ENCODE measurements at regions of chr15 and their contacts with region 1.

Region 1: DNA sequence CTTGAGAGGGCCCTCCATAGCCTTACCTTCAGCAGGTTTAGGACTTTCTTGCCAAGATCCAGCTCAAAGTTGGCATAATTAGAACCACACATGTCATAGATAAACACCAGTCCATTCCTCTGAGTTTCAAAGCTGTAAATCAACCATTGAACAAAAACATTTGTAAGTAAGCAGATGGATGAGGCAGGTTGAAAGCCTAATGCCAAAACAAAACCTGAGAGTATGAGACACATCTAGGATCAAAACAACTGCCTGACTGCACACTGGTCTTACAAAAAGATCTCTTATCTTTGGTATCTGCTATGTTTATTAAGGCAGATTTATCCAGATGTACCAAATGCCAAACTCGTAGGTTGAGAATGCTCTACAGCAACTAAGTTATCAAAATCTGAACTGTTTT is 61.9 kb downstream of the PTPN9 start:
- DNase-seq: no peak
- H3K4me3 Mint-ChIP-seq: no peak overlapping the region
- H3K27ac Mint-ChIP-seq: no peak overlapping the region
- H3K4me1 Mint-ChIP-seq: peaks cover 13% of the 10 kb centered on the region
- H3K27me3 Mint-ChIP-seq: no peaks in the 10 kb centered on the region
- CTCF ChIP-seq: no peak

Region 2: GRCh38 chr15:75532413-75533147 is 15.3 kb after region 1 on chr15:
- CTCF ChIA-PET with region 1: interaction called, 3 read pairs
- POLR2A ChIA-PET with region 1: interaction called, 12 read pairs
- intact Hi-C with region 1: no loop called
- DNase-seq: peak; percentile 87
- H3K4me3 Mint-ChIP-seq: peak overlapping the region; percentile 21
- H3K27ac Mint-ChIP-seq: peak overlapping the region; percentile 81
- H3K4me1 Mint-ChIP-seq: peaks cover 30% of the 10 kb centered on the region
- H3K27me3 Mint-ChIP-seq: no peaks in the 10 kb centered on the region
- CTCF ChIP-seq: peak; percentile 38

Measured in MCF 10A (cell line).